Heart right ventricle (tissue), 16 donors: ENCODE measurements at regions of chrX and their contacts with region 1.

Region 1: GRCh38 chrX:73850124-73851013 is 287.4 kb downstream of the CHIC1 start:
- DNase-seq: no peak
- ATAC-seq: peak in 1 of 8 donors; percentile 2
- H3K4me3 ChIP-seq: peak overlapping the region in 3 of 10 donors; percentile 17 to 64 (median 21)
- H3K27ac ChIP-seq: no peak overlapping the region
- H3K4me1 ChIP-seq: peaks cover 0 to 38% (median 0%) of the 10 kb centered on the region in 9 donors
- H3K27me3 ChIP-seq: no peaks in the 10 kb centered on the region
- CTCF ChIP-seq: peak in 2 of 9 donors; percentile 17 to 27

Region 2: DNA sequence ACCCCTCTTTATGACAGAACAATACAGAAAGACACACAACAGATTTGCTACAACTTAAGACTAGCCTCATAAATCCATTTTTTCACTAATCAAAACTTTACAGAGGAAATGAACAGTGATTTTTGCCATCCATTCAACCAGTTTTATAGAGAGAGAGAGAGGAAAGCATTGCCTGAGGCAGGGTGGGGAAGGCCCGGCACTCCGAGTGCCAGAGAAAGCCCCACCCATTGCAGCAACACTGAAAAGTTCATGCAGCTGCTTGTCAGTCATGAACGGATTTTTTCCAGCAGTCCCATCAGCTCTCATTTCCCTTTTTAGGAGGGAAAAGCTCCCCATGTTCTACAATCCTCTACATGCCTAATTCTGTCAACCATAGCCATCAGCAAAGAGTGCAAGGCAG is 50.5 kb before region 1 on chrX:
- intact Hi-C with region 1: no loop called
- DNase-seq: no peak
- ATAC-seq: no peak
- H3K4me3 ChIP-seq: no peak overlapping the region
- H3K27ac ChIP-seq: no peak overlapping the region
- H3K4me1 ChIP-seq: no peaks in the 10 kb centered on the region
- H3K27me3 ChIP-seq: peaks cover 0 to 11% (median 0%) of the 10 kb centered on the region in 7 donors
- CTCF ChIP-seq: no peak

Region 3: GRCh38 chrX:73943693-73944562 is 93.6 kb after region 1 on chrX:
- intact Hi-C with region 1: loop called in 2 of 10 experiments (anchors 5 to 10 kb)
- DNase-seq: peak; percentile 79 to 82
- ATAC-seq: peak; percentile 98 to 100 (median 100)
- H3K4me3 ChIP-seq: peak overlapping the region; percentile 42 to 85 (median 72)
- H3K27ac ChIP-seq: peak overlapping the region in 9 of 10 donors; percentile 59 to 94 (median 82)
- H3K4me1 ChIP-seq: peaks cover 0 to 33% (median 9%) of the 10 kb centered on the region in 9 donors
- H3K27me3 ChIP-seq: no peaks in the 10 kb centered on the region
- CTCF ChIP-seq: no peak

Region 4: GRCh38 chrX:74015379-74016019 is 165.1 kb after region 1 on chrX:
- intact Hi-C with region 1: loop called (anchors 1 to 10 kb)
- DNase-seq: peak in 1 of 2 donors; percentile 31
- ATAC-seq: peak; percentile 46 to 91 (median 72)
- H3K4me3 ChIP-seq: no peak overlapping the region
- H3K27ac ChIP-seq: no peak overlapping the region
- H3K4me1 ChIP-seq: no peaks in the 10 kb centered on the region
- H3K27me3 ChIP-seq: no peaks in the 10 kb centered on the region
- CTCF ChIP-seq: peak; percentile 34 to 89 (median 70)